Caco-2 (cell line): ENCODE measurements at regions of chr10 and their contacts with region 1.

Region 1: DNA sequence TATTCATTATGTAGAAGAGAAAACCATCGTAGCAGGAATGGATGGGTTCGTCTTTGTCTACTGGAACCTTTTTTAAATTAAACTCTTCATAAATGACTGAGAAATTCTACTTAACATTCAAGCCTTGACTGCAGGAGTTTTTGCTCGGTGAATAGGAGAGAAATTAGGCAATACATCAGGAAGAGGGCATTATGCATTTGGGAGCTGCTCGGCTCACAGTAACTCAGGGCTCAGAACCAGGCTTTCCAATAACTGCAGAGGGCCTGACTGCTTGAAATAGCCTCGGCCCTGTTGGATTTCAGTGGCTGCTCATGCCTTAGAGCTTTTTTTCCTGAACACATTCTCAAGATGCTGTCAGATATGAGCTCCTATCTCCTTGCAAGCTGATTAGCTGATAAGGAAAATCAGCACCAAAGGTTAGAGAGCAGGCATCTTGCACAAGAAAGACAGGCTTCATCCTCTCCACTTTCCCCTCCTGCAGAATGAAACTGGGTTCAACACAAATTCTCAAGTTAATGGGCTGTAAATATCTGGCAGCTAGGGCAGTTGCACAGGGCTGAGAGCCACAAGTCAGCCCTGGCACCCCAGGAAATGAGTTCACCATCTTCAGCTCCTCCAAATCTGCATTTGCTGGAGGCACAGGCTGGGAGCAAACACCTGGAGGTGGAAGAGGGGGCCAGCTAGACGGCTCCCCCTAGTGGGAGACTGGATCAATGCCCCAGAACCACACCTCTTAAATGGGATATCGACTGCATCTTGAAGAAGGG is 24.3 kb downstream of the TECTB start:
- DNase-seq: peak; percentile 76 to 82
- H3K4me3 ChIP-seq: no peak overlapping the region
- H3K4me3 Mint-ChIP-seq: peak overlapping the region; percentile 15
- H3K27ac Mint-ChIP-seq: peak overlapping the region; percentile 50
- H3K4me1 ChIP-seq: peaks cover 38% of the 10 kb centered on the region
- H3K4me1 Mint-ChIP-seq: peaks cover 31% of the 10 kb centered on the region
- H3K27me3 ChIP-seq: no peaks in the 10 kb centered on the region
- H3K27me3 Mint-ChIP-seq: no peaks in the 10 kb centered on the region
- CTCF ChIP-seq: peak; percentile 94 to 95

Region 2: DNA sequence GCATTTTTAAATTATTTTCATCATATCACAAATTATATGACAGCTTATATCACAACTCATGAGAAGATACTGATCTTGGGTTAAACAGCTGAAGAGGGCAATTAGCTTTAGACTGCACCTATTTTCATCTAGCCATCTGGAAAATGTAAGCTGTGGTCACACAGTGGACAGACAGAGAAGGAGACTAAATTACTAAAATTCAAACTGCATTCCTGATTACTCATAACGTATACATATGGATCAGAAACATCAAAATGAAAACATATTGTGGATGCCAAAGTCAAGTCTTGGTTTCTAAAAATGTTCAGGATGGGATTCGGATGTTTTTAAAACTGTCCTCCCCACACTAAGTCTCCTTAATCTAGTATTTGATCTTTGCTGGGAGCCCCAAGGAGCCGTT is 1395.2 kb before region 1 on chr10:
- CTCF ChIA-PET with region 1: no interaction called
- POLR2A ChIA-PET with region 1: no interaction called
- intact Hi-C with region 1: no loop called
- DNase-seq: no peak
- H3K4me3 ChIP-seq: no peak overlapping the region
- H3K4me3 Mint-ChIP-seq: no peak overlapping the region
- H3K27ac Mint-ChIP-seq: no peak overlapping the region
- H3K4me1 ChIP-seq: no peaks in the 10 kb centered on the region
- H3K4me1 Mint-ChIP-seq: peaks cover 8% of the 10 kb centered on the region
- H3K27me3 ChIP-seq: no peaks in the 10 kb centered on the region
- H3K27me3 Mint-ChIP-seq: no peaks in the 10 kb centered on the region
- CTCF ChIP-seq: no peak

Region 3: GRCh38 chr10:112115799-112116385 is 191.6 kb before region 1 on chr10:
- CTCF ChIA-PET with region 1: interaction called, 6 read pairs
- POLR2A ChIA-PET with region 1: no interaction called
- intact Hi-C with region 1: loop called (anchors 1 kb)
- DNase-seq: peak; percentile 62 to 73
- H3K4me3 ChIP-seq: no peak overlapping the region
- H3K4me3 Mint-ChIP-seq: no peak overlapping the region
- H3K27ac Mint-ChIP-seq: no peak overlapping the region
- H3K4me1 ChIP-seq: no peaks in the 10 kb centered on the region
- H3K4me1 Mint-ChIP-seq: no peaks in the 10 kb centered on the region
- H3K27me3 ChIP-seq: no peaks in the 10 kb centered on the region
- H3K27me3 Mint-ChIP-seq: peaks cover 10% of the 10 kb centered on the region
- CTCF ChIP-seq: peak; percentile 88 to 91

Region 4: DNA sequence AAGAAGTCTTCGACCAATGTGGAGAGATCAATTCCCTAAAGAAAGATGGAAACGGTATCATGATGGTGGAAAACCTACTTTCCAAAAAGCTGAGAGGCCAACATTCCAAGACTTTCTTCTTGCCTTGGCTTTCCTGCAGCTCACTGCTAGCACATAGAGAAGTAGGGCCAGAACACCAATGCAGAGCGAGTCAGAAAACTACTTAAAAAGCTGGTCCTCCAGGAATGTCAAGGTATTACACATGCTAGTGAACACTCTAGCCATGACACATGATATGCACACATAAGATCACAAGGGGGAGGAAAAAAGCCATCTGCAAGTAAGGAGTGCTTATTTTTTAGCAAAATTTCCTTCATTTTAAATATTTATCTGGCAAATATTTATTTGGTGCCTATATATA is 146.7 kb before region 1 on chr10:
- CTCF ChIA-PET with region 1: interaction called, 13 read pairs
- POLR2A ChIA-PET with region 1: no interaction called
- intact Hi-C with region 1: loop called (anchors 5 kb)
- DNase-seq: no peak
- H3K4me3 ChIP-seq: no peak overlapping the region
- H3K4me3 Mint-ChIP-seq: no peak overlapping the region
- H3K27ac Mint-ChIP-seq: no peak overlapping the region
- H3K4me1 ChIP-seq: 0 out of 2 replicates have a peak, but pooled peaks cover 5% of the 10 kb centered on the region
- H3K4me1 Mint-ChIP-seq: no peaks in the 10 kb centered on the region
- H3K27me3 ChIP-seq: no peaks in the 10 kb centered on the region
- H3K27me3 Mint-ChIP-seq: no peaks in the 10 kb centered on the region
- CTCF ChIP-seq: no peak

Region 5: GRCh38 chr10:112183329-112184051 is 124.1 kb before region 1 on chr10 and contains the start of gene GPAM:
- CTCF ChIA-PET with region 1: interaction called, 17 read pairs
- POLR2A ChIA-PET with region 1: interaction called, 7 read pairs
- intact Hi-C with region 1: loop called (anchors 1 kb)
- DNase-seq: peak; percentile 95 to 99
- H3K4me3 ChIP-seq: peak within 1 kb of the TSS; percentile 93
- H3K4me3 Mint-ChIP-seq: peak within 1 kb of the TSS; percentile 85
- H3K27ac Mint-ChIP-seq: peak within 1 kb of the TSS; percentile 92
- H3K4me1 ChIP-seq: peaks cover 35% of the 10 kb centered on the region
- H3K4me1 Mint-ChIP-seq: peaks cover 21% of the 10 kb centered on the region
- H3K27me3 ChIP-seq: no peaks in the 10 kb centered on the region
- H3K27me3 Mint-ChIP-seq: no peaks in the 10 kb centered on the region
- CTCF ChIP-seq: no peak
- total RNA-seq, gene GPAM: 40.2 and 44.4 TPM in 2 replicates

Region 6: GRCh38 chr10:112261281-112261822 is 46.2 kb before region 1 on chr10:
- CTCF ChIA-PET with region 1: interaction called, 7 read pairs
- POLR2A ChIA-PET with region 1: interaction called, 3 read pairs
- intact Hi-C with region 1: loop called (anchors 1 kb)
- DNase-seq: peak; percentile 75 to 81
- H3K4me3 ChIP-seq: no peak overlapping the region
- H3K4me3 Mint-ChIP-seq: peak overlapping the region; percentile 2
- H3K27ac Mint-ChIP-seq: peak overlapping the region; percentile 75
- H3K4me1 ChIP-seq: peaks cover 31% of the 10 kb centered on the region
- H3K4me1 Mint-ChIP-seq: peaks cover 25% of the 10 kb centered on the region
- H3K27me3 ChIP-seq: no peaks in the 10 kb centered on the region
- H3K27me3 Mint-ChIP-seq: no peaks in the 10 kb centered on the region
- CTCF ChIP-seq: no peak

Region 7: DNA sequence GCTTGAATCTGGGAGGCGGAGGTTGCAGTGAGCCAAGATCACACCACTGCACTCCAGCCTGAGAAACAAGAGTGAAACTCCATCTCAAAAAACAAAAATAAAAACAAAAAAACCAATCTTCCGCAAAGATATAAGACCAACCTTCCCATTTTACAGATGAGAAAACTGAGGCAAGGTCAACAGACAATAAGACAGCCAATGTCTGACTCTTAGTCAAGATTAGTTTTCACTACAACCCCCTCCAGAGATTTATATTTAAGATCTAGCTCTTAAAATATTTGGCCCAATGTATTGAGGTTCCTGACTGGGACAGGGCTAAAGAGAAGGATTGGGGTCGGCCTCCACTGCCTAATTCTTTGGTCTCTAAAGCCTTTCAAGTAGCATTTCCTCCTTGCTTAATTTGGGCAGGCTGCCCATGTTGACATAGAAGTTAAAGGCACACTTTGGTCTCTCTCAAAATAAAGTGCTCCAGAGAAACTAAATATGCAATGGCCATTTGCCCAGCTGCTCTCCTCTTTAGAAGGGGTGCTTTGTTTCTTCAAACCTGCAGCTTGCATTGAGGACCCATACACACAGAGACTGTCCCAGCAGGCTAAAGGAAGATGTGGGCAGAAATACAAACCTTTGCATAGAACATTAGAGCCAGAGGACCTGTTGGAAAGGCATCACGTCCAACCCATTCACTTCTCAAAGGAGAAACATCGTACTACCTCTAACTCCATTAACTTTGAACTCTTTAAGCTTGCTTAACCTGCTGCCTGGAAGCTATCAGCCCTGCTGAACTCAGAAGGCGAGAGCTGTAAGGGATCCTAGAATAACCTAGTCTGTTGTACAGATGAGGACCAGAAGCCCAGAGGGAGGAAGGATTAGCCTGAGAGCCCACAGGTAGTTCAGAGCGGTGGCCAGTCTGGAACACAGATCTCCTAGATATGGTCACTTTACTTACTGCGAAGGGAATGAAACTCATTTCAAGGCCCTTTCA is 20.4 kb before region 1 on chr10:
- CTCF ChIA-PET with region 1: no interaction called
- POLR2A ChIA-PET with region 1: no interaction called
- intact Hi-C with region 1: no loop called
- DNase-seq: no peak
- H3K4me3 ChIP-seq: no peak overlapping the region
- H3K4me3 Mint-ChIP-seq: no peak overlapping the region
- H3K27ac Mint-ChIP-seq: no peak overlapping the region
- H3K4me1 ChIP-seq: no peaks in the 10 kb centered on the region
- H3K4me1 Mint-ChIP-seq: no peaks in the 10 kb centered on the region
- H3K27me3 ChIP-seq: no peaks in the 10 kb centered on the region
- H3K27me3 Mint-ChIP-seq: no peaks in the 10 kb centered on the region
- CTCF ChIP-seq: no peak

Region 8: DNA sequence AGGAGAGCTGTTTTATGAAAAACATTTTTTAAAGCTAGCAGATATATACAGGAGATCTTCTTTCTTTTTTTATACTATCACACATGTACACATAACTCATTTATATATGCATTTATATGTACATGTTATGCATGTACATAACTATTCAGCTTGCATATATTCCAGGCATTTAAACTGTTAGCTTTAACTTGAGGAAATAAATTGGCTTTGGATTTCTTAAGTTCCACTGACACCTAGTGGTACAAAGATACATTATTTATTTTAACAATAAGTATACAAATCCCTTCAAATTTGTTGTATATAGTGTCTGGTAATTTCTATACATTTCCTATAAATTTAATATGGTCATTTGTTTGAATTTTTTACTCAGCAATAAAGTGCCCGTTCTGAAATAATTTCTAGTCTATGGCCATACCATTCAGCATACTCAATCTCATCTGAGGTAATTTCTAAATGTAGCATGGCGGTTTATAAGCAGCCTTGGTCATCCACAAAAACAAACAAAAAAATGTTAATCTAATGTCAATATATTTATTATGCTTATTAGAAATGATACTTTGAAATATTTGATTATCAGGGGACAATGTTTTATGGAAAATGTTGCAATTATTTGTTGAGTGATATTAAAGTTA is 127.6 kb after region 1 on chr10:
- CTCF ChIA-PET with region 1: interaction called, 13 read pairs
- POLR2A ChIA-PET with region 1: no interaction called
- intact Hi-C with region 1: no loop called
- DNase-seq: no peak
- H3K4me3 ChIP-seq: no peak overlapping the region
- H3K4me3 Mint-ChIP-seq: no peak overlapping the region
- H3K27ac Mint-ChIP-seq: no peak overlapping the region
- H3K4me1 ChIP-seq: no peaks in the 10 kb centered on the region
- H3K4me1 Mint-ChIP-seq: no peaks in the 10 kb centered on the region
- H3K27me3 ChIP-seq: no peaks in the 10 kb centered on the region
- H3K27me3 Mint-ChIP-seq: no peaks in the 10 kb centered on the region
- CTCF ChIP-seq: peak; percentile 31 to 57

Region 9: GRCh38 chr10:112803961-112804401 is 496.4 kb after region 1 on chr10:
- CTCF ChIA-PET with region 1: no interaction called
- POLR2A ChIA-PET with region 1: no interaction called
- intact Hi-C with region 1: no loop called
- DNase-seq: no peak
- H3K4me3 ChIP-seq: no peak overlapping the region
- H3K4me3 Mint-ChIP-seq: no peak overlapping the region
- H3K27ac Mint-ChIP-seq: peak overlapping the region; percentile 17
- H3K4me1 ChIP-seq: peaks cover 24% of the 10 kb centered on the region
- H3K4me1 Mint-ChIP-seq: peaks cover 19% of the 10 kb centered on the region
- H3K27me3 ChIP-seq: no peaks in the 10 kb centered on the region
- H3K27me3 Mint-ChIP-seq: no peaks in the 10 kb centered on the region
- CTCF ChIP-seq: no peak